ENCODE measurements at regions of chr4 and their contacts with region 1.

Region 1: DNA sequence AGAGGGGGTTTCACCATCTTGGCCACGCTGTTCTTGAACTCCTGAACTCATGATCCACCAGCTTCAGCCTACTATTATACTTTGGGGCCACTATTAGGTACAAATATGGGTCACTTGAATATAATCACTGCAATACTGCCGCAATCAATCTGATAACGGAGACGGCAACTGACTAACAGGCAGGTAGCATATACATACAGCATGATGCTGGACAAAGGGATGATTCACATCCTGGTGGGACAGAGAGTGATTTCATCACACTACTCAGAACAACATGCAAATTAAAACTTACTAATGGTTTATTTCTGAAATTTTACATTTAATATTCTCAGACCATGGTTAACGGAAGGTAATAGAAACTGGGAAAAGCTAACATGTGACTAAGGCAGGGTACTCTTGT is 10.9 kb downstream of the LRBA start:
- DNase-seq: no peak
- H3K4me3 ChIP-seq: no peak overlapping the region
- H3K27ac ChIP-seq: no peak overlapping the region
- H3K4me1 ChIP-seq: peaks cover under 1% of the 10 kb centered on the region
- H3K27me3 ChIP-seq: no peaks in the 10 kb centered on the region
- CTCF ChIP-seq: no peak

Region 2: DNA sequence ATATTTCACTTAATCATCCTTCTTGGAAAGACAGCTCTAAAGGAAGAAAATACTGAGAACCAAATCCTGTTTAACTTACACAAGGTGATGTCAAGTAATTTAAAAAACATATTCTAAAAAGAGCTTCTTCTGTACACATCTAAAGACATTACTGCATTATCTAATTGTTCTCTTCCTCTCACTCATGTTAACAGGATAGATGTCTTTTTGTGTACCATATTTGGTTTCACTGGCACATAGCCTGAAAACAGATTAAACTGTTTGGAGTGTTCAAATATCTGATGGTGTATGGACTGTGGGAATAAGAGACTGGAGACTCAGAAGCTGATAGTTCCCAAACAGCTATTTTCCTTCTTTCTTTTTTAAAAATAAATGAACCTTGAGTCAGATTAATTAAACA is 635.6 kb before region 1 on chr4:
- CTCF ChIA-PET with region 1: no interaction called
- POLR2A ChIA-PET with region 1: interaction called, 11 read pairs
- intact Hi-C with region 1: no loop called
- DNase-seq: peak; percentile 81
- H3K4me3 ChIP-seq: no peak overlapping the region
- H3K27ac ChIP-seq: no peak overlapping the region
- H3K4me1 ChIP-seq: peaks cover 45% of the 10 kb centered on the region
- H3K27me3 ChIP-seq: no peaks in the 10 kb centered on the region
- CTCF ChIP-seq: no peak

Region 3: DNA sequence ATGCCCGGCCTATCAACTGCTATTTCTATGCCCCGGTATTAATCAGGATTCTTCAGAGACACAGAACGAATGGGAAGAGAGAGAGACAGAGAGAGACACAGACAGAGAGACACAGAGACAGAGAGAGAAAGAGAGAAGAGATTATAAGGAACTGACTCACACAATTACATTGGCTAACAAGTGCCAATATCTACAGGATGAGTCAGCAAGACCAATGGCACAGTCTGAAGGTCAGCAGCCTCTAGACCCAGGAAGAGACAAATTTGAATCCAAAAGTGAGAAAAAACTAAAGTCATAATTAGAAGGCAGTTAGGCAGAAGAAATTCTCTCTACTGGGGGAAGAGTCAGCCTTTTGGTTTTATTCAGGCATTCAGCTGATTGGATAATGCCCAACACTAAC is 235.0 kb before region 1 on chr4:
- CTCF ChIA-PET with region 1: no interaction called
- POLR2A ChIA-PET with region 1: no interaction called
- intact Hi-C with region 1: no loop called
- DNase-seq: no peak
- H3K4me3 ChIP-seq: no peak overlapping the region
- H3K27ac ChIP-seq: no peak overlapping the region
- H3K4me1 ChIP-seq: no peaks in the 10 kb centered on the region
- H3K27me3 ChIP-seq: no peaks in the 10 kb centered on the region
- CTCF ChIP-seq: no peak

Region 4: DNA sequence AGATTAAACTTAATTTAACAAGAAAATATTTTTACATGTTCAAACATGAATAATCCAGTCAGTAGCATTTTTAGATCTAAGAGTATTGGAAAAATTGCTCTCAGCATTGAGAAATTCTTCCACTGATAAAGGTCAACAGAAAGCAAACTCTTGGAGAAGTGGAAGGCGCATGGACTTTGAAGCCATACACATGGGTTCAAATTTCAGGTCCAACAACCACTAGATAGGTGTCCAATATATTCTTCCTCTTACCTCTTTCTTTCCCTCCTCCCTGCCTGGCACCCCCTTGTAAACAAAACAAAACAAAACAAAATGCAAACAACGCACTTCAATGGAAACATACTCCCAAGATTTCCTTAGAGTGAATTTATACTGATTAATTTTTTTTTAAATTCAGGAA is 244.3 kb after region 1 on chr4:
- CTCF ChIA-PET with region 1: no interaction called
- POLR2A ChIA-PET with region 1: no interaction called
- intact Hi-C with region 1: no loop called
- DNase-seq: no peak
- H3K4me3 ChIP-seq: no peak overlapping the region
- H3K27ac ChIP-seq: no peak overlapping the region
- H3K4me1 ChIP-seq: no peaks in the 10 kb centered on the region
- H3K27me3 ChIP-seq: no peaks in the 10 kb centered on the region
- CTCF ChIP-seq: no peak

Region 5: DNA sequence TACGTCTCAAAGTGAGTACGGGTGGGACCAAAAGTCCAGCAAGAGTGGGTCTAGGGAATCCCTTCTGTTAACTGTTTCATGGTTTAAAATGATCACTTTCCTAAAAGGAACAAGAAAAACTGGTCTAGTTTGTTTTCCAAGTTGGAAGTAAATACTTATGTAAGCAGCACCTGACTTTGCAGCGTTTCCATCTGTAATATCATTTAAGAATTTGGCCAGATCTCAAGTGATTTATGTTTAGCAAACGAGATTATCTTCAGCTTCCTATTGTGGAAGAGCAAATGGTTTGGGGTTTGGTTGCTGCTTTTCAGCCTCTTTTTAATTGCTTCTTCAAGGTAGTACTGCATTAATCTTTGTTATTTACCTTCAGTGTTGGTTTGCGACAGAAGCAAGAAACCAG is 455.2 kb after region 1 on chr4:
- CTCF ChIA-PET with region 1: no interaction called
- POLR2A ChIA-PET with region 1: no interaction called
- intact Hi-C with region 1: no loop called
- DNase-seq: no peak
- H3K4me3 ChIP-seq: no peak overlapping the region
- H3K27ac ChIP-seq: no peak overlapping the region
- H3K4me1 ChIP-seq: no peaks in the 10 kb centered on the region
- H3K27me3 ChIP-seq: peaks cover 2% of the 10 kb centered on the region
- CTCF ChIP-seq: no peak

Measured in A673 (cell line).